Panc1 (cell line): ENCODE measurements at regions of chr1 and their contacts with region 1.

Region 1: DNA sequence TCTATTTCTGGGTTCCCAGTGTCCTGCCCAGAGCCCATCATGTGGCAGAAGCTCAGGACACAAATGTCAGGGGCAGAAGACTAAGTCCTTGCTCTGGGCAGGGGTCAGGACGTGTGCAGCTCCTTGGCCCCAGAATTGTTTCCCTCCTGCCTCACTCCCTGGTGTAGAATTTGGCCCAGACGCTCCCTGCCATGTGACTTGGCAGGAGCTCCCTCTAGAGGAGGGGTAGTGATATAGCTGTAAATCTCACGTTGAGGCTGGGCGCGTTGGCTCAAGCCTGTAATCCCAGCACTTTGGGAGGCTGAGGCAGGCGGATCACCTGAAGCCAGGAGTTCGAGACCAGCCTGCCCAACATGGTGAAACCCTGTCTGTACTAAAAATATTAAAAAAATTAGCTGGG is 91.2 kb downstream of the UBIAD1 start:
- DNase-seq: no peak
- ATAC-seq: peak; percentile 70
- H3K4me3 ChIP-seq: no peak overlapping the region
- H3K27ac ChIP-seq: no peak overlapping the region
- H3K4me1 ChIP-seq: no peaks in the 10 kb centered on the region
- H3K27me3 ChIP-seq: no peaks in the 10 kb centered on the region
- CTCF ChIP-seq: peak; percentile 84

Region 2: DNA sequence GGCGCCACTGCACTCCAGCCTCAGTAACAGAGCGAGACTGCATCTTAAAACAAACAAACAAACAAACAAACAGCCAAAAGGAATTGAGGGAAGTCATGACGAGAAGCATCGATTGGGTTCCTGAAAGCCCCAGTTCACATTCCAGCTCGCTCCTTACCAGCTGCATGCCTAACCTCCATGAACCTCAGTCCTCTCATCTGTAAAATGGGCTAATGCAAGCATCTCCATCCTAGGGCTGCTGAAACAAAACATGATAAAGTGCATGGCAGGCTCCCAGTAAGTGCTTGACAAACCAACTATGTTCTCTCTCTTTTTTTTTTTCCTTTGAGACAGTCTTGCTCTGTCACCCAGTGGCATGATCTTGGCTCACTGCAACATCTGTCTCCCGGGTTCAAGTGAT is 35.1 kb after region 1 on chr1:
- CTCF ChIA-PET with region 1: no interaction called
- POLR2A ChIA-PET with region 1: interaction called, 11 read pairs
- in situ Hi-C with region 1: no loop called
- intact Hi-C with region 1: no loop called
- DNase-seq: no peak
- ATAC-seq: no peak
- H3K4me3 ChIP-seq: no peak overlapping the region
- H3K27ac ChIP-seq: no peak overlapping the region
- H3K4me1 ChIP-seq: no peaks in the 10 kb centered on the region
- H3K27me3 ChIP-seq: peaks cover 2% of the 10 kb centered on the region; the same call in 1 of the 2 replicates
- CTCF ChIP-seq: no peak

Region 3: GRCh38 chr1:11422686-11423085 is 58.5 kb after region 1 on chr1:
- CTCF ChIA-PET with region 1: no interaction called
- POLR2A ChIA-PET with region 1: interaction called, 13 read pairs
- in situ Hi-C with region 1: no loop called
- intact Hi-C with region 1: no loop called
- DNase-seq: no peak
- ATAC-seq: no peak
- H3K4me3 ChIP-seq: no peak overlapping the region
- H3K27ac ChIP-seq: no peak overlapping the region
- H3K4me1 ChIP-seq: no peaks in the 10 kb centered on the region
- H3K27me3 ChIP-seq: peaks cover 3% of the 10 kb centered on the region; the same call in 1 of the 2 replicates
- CTCF ChIP-seq: no peak